ENCODE measurements at regions of chr14 and their contacts with region 1.

Region 1: DNA sequence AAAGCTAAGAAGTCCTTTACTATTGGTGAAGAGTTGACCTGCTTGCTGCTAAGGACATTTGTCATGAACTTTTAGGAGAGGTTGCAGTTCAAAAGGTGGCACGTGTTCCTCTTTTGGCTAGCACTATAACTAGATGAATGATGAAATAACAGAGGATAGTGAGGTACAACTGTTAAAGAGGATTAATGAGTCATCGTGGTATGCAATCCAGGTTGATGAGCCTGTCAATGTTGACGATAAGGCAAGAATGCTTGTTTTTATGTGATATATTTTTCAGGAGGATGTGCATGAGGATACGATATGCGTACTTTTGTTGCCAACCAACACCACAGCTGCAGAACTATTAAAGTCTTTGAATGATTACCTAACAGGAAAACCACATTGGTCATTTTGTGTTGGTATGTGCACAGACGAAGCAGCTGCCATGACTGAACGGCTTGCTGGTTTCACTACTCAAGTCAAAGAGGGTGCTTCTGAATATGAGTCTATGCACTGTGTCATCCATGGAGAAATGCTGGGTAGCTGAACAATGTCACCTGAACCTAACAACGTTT is 10.6 kb downstream of the CEP128 start:
- DNase-seq: peak; percentile 78 to 89 (median 85)
- H3K4me3 ChIP-seq: no peak overlapping the region
- H3K4me3 Mint-ChIP-seq: peak overlapping the region; percentile 57 to 82 (median 68)
- H3K27ac ChIP-seq: peak overlapping the region; percentile 38
- H3K27ac Mint-ChIP-seq: peak overlapping the region; percentile 82 to 96 (median 93)
- H3K4me1 ChIP-seq: peaks cover 31% of the 10 kb centered on the region
- H3K4me1 Mint-ChIP-seq: peaks cover 39 to 62% (median 45%) of the 10 kb centered on the region in 4 donors
- H3K27me3 ChIP-seq: no peaks in the 10 kb centered on the region
- H3K27me3 Mint-ChIP-seq: no peaks in the 10 kb centered on the region

Region 2: DNA sequence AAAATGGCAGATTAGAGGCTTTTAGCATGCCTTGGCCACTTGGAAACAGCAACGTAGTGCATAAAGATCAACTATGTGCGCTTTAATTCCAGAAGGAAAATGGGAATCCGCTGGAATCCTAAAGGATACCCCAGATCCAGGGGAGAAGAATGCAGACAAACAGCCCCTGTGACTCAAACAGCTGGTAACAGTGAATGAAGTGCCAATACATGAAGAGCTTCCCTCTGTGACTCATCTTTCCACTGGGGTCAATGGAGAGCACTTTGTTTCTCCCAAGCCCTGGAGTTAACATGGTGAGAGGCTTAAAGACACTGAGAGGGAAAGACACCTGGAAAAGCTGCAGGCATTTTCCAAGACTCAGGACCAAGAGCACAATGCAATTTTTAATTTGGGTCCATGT is 252.5 kb before region 1 on chr14:
- CTCF ChIA-PET with region 1: no interaction called
- POLR2A ChIA-PET with region 1: no interaction called
- intact Hi-C with region 1: no loop called
- DNase-seq: no peak
- H3K4me3 ChIP-seq: no peak overlapping the region
- H3K4me3 Mint-ChIP-seq: no peak overlapping the region
- H3K27ac ChIP-seq: no peak overlapping the region
- H3K27ac Mint-ChIP-seq: no peak overlapping the region
- H3K4me1 ChIP-seq: no peaks in the 10 kb centered on the region
- H3K4me1 Mint-ChIP-seq: no peaks in the 10 kb centered on the region
- H3K27me3 ChIP-seq: no peaks in the 10 kb centered on the region
- H3K27me3 Mint-ChIP-seq: no peaks in the 10 kb centered on the region

Region 3: GRCh38 chr14:80714474-80714873 is 216.4 kb before region 1 on chr14:
- CTCF ChIA-PET with region 1: no interaction called
- POLR2A ChIA-PET with region 1: no interaction called
- intact Hi-C with region 1: no loop called
- DNase-seq: no peak
- H3K4me3 ChIP-seq: no peak overlapping the region
- H3K4me3 Mint-ChIP-seq: no peak overlapping the region
- H3K27ac ChIP-seq: no peak overlapping the region
- H3K27ac Mint-ChIP-seq: no peak overlapping the region
- H3K4me1 ChIP-seq: no peaks in the 10 kb centered on the region
- H3K4me1 Mint-ChIP-seq: peaks cover 0 to 6% (median 4%) of the 10 kb centered on the region in 4 donors
- H3K27me3 ChIP-seq: no peaks in the 10 kb centered on the region
- H3K27me3 Mint-ChIP-seq: no peaks in the 10 kb centered on the region

Region 4: GRCh38 chr14:80941241-80942182 is 10.6 kb after region 1 on chr14 and contains the start of gene CEP128:
- CTCF ChIA-PET with region 1: interaction called, 13 read pairs
- POLR2A ChIA-PET with region 1: interaction called, 58 read pairs
- intact Hi-C with region 1: loop called (anchors 1 kb)
- DNase-seq: peak; percentile 77 to 84 (median 82)
- H3K4me3 ChIP-seq: peak within 1 kb of the TSS; percentile 64 to 75
- H3K4me3 Mint-ChIP-seq: peak within 1 kb of the TSS; percentile 89 to 95 (median 92)
- H3K27ac ChIP-seq: peak within 1 kb of the TSS; percentile 80
- H3K27ac Mint-ChIP-seq: peak within 1 kb of the TSS; percentile 82 to 96 (median 93)
- H3K4me1 ChIP-seq: peaks cover 30% of the 10 kb centered on the region
- H3K4me1 Mint-ChIP-seq: peaks cover 19 to 34% (median 25%) of the 10 kb centered on the region in 4 donors
- H3K27me3 ChIP-seq: no peaks in the 10 kb centered on the region
- H3K27me3 Mint-ChIP-seq: no peaks in the 10 kb centered on the region
- total RNA-seq, gene CEP128: 20.1 to 21.6 TPM

Region 5: DNA sequence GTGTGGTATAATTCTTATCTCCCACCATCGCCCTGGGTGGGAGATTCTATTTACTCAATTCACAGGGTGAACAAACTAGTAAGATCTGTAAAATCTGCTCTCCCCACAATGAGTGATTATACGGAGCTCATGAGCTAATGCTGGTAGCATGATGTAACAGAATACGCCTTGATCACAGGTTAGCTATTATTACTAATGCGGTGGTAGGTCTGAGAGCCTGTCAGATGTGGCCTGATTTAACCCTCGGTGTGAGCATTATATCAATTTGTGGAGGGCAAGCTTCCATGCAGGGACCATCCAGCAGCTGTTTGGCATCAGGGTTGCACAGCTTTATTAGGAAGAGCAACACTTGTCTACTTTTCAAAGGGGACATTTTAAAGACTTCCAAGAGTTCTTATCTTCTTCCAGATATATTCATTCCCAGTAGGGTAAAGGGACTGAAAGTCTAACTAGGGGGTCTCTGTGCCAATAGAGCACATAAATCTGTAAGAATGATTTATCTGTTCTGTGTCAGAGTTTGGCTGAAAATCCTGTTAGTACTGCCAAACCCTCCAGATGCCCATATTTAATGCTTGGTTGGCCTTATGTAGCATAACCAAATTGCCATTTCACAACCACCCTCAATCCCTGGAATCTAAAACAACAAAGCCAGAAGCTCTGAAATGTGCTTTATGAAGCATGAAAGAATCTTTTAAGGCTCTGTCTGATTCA is 43.2 kb after region 1 on chr14:
- CTCF ChIA-PET with region 1: no interaction called
- POLR2A ChIA-PET with region 1: no interaction called
- intact Hi-C with region 1: no loop called
- DNase-seq: peak in 4 of 5 donors; percentile 17 to 58 (median 34)
- H3K4me3 ChIP-seq: no peak overlapping the region
- H3K4me3 Mint-ChIP-seq: peak overlapping the region in 2 of 8 donors; percentile 47 to 58
- H3K27ac ChIP-seq: no peak overlapping the region
- H3K27ac Mint-ChIP-seq: peak overlapping the region in 3 of 7 donors; percentile 14 to 84 (median 63)
- H3K4me1 ChIP-seq: peaks cover 21% of the 10 kb centered on the region
- H3K4me1 Mint-ChIP-seq: peaks cover 14 to 29% (median 22%) of the 10 kb centered on the region in 4 donors
- H3K27me3 ChIP-seq: no peaks in the 10 kb centered on the region
- H3K27me3 Mint-ChIP-seq: no peaks in the 10 kb centered on the region

Region 6: DNA sequence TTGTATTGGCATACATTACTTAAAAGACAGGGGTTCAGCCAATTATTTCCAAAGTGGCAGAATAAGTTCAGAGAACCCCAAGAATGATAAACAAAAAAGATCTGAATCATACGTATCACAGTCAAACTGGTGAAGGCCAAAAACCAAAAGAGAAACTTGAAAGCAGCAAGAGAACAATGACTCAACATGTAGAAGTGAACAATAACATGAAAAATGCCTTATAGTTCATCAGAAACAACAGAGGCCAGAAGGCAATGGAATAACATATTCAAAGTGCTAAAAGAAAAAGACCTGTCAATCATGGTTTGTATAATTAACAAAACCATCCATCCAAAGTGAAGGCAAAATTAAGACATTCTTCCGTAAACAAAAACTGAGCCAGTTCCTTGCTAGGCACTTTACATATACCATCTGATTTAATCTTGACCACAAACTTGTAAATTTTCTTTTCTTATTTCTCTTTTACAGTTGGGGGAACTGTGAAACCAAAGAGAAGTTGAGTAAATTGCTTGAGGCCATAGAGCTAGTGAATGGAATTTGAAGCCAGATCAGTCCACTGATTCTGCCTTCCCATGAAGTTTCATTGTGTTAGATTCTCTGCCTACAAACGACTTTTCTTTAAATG is 834.9 kb after region 1 on chr14:
- CTCF ChIA-PET with region 1: no interaction called
- POLR2A ChIA-PET with region 1: no interaction called
- intact Hi-C with region 1: no loop called
- DNase-seq: no peak
- H3K4me3 ChIP-seq: no peak overlapping the region
- H3K4me3 Mint-ChIP-seq: no peak overlapping the region
- H3K27ac ChIP-seq: no peak overlapping the region
- H3K27ac Mint-ChIP-seq: no peak overlapping the region
- H3K4me1 ChIP-seq: no peaks in the 10 kb centered on the region
- H3K4me1 Mint-ChIP-seq: no peaks in the 10 kb centered on the region
- H3K27me3 ChIP-seq: no peaks in the 10 kb centered on the region
- H3K27me3 Mint-ChIP-seq: no peaks in the 10 kb centered on the region